Ascending aorta (tissue), 2 donors: ENCODE measurements at regions of chr2 and their contacts with region 1.

Region 1: GRCh38 chr2:71700658-71701397 is 247.5 kb downstream of the DYSF start:
- DNase-seq: peak; percentile 56 to 94
- H3K4me3 ChIP-seq: no peak overlapping the region
- H3K27ac ChIP-seq: peak overlapping the region; percentile 71 to 80
- H3K4me1 ChIP-seq: peaks cover 7 to 71% of the 10 kb centered on the region in 2 donors
- H3K27me3 ChIP-seq: no peaks in the 10 kb centered on the region
- CTCF ChIP-seq: no peak

Region 2: GRCh38 chr2:71646028-71646427 is 54.8 kb before region 1 on chr2:
- intact Hi-C with region 1: loop called (anchors 5 kb)
- DNase-seq: peak in 1 of 2 donors; percentile 88
- H3K4me3 ChIP-seq: no peak overlapping the region
- H3K27ac ChIP-seq: peak overlapping the region; percentile 41 to 81
- H3K4me1 ChIP-seq: peaks cover 4 to 12% of the 10 kb centered on the region in 2 donors
- H3K27me3 ChIP-seq: no peaks in the 10 kb centered on the region
- CTCF ChIP-seq: no peak

Region 3: DNA sequence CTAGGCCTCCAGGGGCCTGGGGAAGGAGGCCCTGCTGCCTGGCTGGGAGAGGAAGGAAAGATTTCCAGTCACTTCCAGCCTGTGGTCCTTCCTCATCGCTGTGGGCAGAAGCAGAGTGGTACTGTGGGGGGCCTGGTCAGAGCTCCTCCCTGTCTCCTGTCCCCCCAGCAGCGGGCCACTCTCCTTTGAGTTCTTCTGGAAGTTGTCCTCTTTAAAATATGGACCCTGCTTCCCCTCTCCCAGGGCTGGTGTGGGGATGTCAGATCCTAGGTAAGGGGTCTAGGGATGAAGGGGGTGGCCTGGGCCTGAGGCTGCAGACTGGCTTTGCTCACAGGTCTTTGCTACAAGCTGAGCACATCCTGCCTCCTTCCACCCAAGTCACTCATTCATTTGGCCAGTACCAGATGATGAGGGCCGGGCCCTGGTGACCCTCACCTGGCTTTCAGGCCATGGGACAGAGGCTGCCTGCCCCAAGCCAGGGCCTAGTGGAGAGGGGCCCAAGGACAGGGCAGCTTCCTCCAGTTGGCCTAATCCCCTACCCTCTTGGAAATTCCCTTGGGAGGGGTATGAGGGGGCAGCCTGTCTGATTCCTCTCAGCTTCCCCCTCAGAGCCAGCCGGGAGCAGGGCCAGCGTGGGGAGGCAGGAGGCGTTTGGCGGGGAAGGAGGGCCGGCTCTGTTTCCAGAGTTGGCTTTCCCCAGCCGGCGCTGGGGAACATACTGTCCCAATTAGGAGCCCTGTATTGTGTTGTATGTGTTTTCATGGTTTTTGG is 15.6 kb before region 1 on chr2:
- intact Hi-C with region 1: no loop called
- DNase-seq: no peak
- H3K4me3 ChIP-seq: no peak overlapping the region
- H3K27ac ChIP-seq: peak overlapping the region; percentile 37 to 63
- H3K4me1 ChIP-seq: peaks cover 3% of the 10 kb centered on the region in 2 donors
- H3K27me3 ChIP-seq: no peaks in the 10 kb centered on the region
- CTCF ChIP-seq: no peak

Region 4: DNA sequence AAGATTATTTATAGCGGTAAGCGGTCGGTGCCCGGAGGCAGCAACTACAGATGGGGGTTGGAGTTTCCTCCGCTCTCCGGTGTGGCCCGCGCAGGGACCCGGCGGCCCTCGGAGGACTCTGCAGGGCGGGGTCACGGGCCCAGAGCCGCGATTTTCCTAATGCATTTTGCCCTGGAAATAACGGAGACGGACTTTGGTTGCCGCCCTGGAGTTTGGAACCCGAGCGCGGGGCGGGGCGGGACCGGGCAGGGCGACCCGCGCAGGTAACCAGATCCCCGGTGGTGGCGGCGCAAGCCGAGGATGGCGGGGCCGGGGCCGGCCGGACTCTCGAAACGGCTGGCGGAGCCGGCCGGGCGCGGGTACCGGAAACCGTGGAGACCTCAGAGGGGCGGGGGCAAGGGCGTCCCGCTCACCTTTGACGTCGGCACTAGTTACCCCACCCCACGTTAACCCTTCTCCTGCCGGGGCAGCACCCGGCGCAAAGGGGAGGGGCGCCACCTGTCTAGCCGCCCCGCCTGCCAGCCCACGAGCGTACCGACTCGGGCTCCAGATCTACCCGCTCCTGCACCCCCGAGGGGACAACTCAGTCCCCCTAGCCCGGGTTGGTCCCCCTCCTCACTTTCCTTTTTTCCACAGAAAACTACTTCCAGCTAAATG is 443.9 kb after region 1 on chr2:
- intact Hi-C with region 1: loop called (anchors 5 kb)
- DNase-seq: peak in 1 of 2 donors; percentile 69
- H3K4me3 ChIP-seq: peak overlapping the region; percentile 52 to 72
- H3K27ac ChIP-seq: peak overlapping the region; percentile 85 to 87
- H3K4me1 ChIP-seq: peaks cover 20 to 55% of the 10 kb centered on the region in 2 donors
- H3K27me3 ChIP-seq: no peaks in the 10 kb centered on the region
- CTCF ChIP-seq: no peak